ENCODE measurements at regions of chr1 and their contacts with region 1.

Region 1: DNA sequence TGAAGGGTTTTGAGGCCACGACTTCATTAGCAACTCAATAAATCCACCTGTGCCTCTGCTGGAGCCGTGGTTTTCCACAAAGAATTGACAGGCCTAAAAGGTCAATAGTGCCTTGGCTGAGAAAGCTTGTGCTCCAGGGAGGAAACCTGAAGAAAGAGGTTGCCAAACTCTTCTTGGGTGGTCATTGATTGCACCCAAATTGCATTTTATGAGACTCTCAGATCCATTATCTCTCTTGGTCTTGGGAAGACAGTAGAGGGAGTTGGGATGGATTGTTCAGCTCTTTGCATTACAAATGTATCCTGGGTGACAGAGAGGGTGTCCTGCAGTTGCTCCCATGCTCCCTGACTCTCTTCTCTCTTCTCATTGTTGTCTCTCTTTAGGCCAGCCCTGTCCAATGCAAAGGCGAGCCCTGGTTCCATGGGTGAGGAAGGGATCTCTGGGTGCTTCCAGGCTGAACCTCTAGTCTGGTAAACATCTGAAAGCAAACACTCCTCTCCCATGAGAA is 46.1 kb upstream of the HTR1D start:
- DNase-seq: no peak
- ATAC-seq: no peak
- H3K4me3 ChIP-seq: no peak overlapping the region
- H3K27ac ChIP-seq: no peak overlapping the region
- H3K4me1 ChIP-seq: no peaks in the 10 kb centered on the region
- H3K27me3 ChIP-seq: no peaks in the 10 kb centered on the region
- CTCF ChIP-seq: no peak

Region 2: GRCh38 chr1:23081376-23081775 is 182.1 kb before region 1 on chr1:
- intact Hi-C with region 1: loop called in 1 of 10 experiments (anchors 10 kb)
- DNase-seq: no peak
- ATAC-seq: no peak
- H3K4me3 ChIP-seq: no peak overlapping the region
- H3K27ac ChIP-seq: no peak overlapping the region
- H3K4me1 ChIP-seq: peaks cover 0 to 21% (median 12%) of the 10 kb centered on the region in 9 donors
- H3K27me3 ChIP-seq: no peaks in the 10 kb centered on the region
- CTCF ChIP-seq: no peak